CD8-positive, alpha-beta T cell (primary cell): ENCODE measurements at regions of chr18 and their contacts with region 1.

Region 1: GRCh38 chr18:47930931-47931717 is 665 bp upstream of the SMAD2 start:
- DNase-seq: peak; percentile 82 to 98 (median 95)
- ATAC-seq: peak; percentile 76
- H3K4me3 ChIP-seq: peak overlapping the region; percentile 61 to 63
- H3K4me3 Mint-ChIP-seq: peak overlapping the region; percentile 78
- H3K27ac ChIP-seq: peak overlapping the region; percentile 62 to 84
- H3K27ac Mint-ChIP-seq: peak overlapping the region; percentile 91
- H3K4me1 ChIP-seq: peaks cover 40% of the 10 kb centered on the region
- H3K4me1 Mint-ChIP-seq: peaks cover 41% of the 10 kb centered on the region
- H3K27me3 ChIP-seq: no peaks in the 10 kb centered on the region
- H3K27me3 Mint-ChIP-seq: no peaks in the 10 kb centered on the region
- CTCF ChIP-seq: no peak

Region 2: DNA sequence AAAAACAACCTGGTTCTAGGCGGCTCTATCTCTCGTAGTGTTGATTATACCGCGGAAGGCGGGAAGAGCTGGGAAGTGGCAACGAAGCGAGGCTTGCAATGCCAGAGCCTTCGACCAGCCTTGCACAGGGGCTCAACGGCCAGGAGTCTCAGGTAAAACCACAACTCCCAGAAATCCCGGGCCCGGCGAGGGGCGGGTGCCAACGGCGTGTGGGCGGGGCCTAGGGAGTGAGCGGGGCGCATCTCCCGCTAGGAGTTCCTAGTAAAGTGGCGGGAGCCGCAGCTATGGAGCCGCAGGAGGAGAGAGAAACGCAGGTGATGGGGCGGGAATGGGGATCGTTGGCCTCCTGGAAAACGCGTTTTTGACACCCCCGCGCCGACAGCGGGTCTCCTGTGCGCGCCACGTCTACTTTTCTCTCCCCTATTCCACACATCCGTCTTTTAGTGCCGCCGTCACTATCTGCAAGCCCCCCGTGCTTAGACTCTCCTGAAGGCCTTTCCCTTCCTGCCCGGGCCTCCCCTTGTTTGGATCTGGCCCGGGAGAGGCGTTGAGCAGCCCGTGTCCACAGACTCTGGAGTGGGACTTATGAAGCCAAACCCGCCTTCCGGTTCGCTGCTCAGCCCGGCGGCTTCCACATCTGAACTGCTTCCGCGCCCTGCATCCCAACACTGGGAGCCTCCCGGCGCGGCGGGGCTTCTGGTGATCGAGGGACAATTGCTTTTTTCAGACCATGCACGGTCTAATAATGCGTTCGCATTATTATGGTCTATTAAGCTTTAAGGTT is 1826.8 kb before region 1 on chr18 and contains the start of gene HAUS1:
- CTCF ChIA-PET with region 1: no interaction called
- POLR2A ChIA-PET with region 1: no interaction called
- intact Hi-C with region 1: loop called in 1 of 2 experiments (anchors 10 kb)
- DNase-seq: peak; percentile 42 to 88 (median 81)
- ATAC-seq: peak; percentile 95
- H3K4me3 ChIP-seq: peak within 1 kb of the TSS; percentile 87 to 90
- H3K4me3 Mint-ChIP-seq: peak within 1 kb of the TSS; percentile 96
- H3K27ac ChIP-seq: peak within 1 kb of the TSS; percentile 42 to 52
- H3K27ac Mint-ChIP-seq: peak within 1 kb of the TSS; percentile 88
- H3K4me1 ChIP-seq: peaks cover 12% of the 10 kb centered on the region
- H3K4me1 Mint-ChIP-seq: peaks cover 31% of the 10 kb centered on the region
- H3K27me3 ChIP-seq: no peaks in the 10 kb centered on the region
- H3K27me3 Mint-ChIP-seq: no peaks in the 10 kb centered on the region
- CTCF ChIP-seq: no peak
- total RNA-seq, gene HAUS1: 6.3 to 8.8 TPM

Region 3: GRCh38 chr18:47150029-47150823 is 780.9 kb before region 1 on chr18 and contains the start of gene HDHD2:
- CTCF ChIA-PET with region 1: no interaction called
- POLR2A ChIA-PET with region 1: no interaction called
- intact Hi-C with region 1: loop called in 1 of 2 experiments (anchors 10 kb)
- DNase-seq: peak; percentile 35 to 87 (median 76)
- ATAC-seq: peak; percentile 77
- H3K4me3 ChIP-seq: peak within 1 kb of the TSS; percentile 76 to 82
- H3K4me3 Mint-ChIP-seq: peak within 1 kb of the TSS; percentile 89
- H3K27ac ChIP-seq: peak within 1 kb of the TSS; percentile 66 to 78
- H3K27ac Mint-ChIP-seq: peak within 1 kb of the TSS; percentile 94
- H3K4me1 ChIP-seq: peaks cover 22% of the 10 kb centered on the region
- H3K4me1 Mint-ChIP-seq: peaks cover 53% of the 10 kb centered on the region
- H3K27me3 ChIP-seq: no peaks in the 10 kb centered on the region
- H3K27me3 Mint-ChIP-seq: no peaks in the 10 kb centered on the region
- CTCF ChIP-seq: no peak
- total RNA-seq, gene HDHD2: 6.6 to 6.8 TPM

Region 4: DNA sequence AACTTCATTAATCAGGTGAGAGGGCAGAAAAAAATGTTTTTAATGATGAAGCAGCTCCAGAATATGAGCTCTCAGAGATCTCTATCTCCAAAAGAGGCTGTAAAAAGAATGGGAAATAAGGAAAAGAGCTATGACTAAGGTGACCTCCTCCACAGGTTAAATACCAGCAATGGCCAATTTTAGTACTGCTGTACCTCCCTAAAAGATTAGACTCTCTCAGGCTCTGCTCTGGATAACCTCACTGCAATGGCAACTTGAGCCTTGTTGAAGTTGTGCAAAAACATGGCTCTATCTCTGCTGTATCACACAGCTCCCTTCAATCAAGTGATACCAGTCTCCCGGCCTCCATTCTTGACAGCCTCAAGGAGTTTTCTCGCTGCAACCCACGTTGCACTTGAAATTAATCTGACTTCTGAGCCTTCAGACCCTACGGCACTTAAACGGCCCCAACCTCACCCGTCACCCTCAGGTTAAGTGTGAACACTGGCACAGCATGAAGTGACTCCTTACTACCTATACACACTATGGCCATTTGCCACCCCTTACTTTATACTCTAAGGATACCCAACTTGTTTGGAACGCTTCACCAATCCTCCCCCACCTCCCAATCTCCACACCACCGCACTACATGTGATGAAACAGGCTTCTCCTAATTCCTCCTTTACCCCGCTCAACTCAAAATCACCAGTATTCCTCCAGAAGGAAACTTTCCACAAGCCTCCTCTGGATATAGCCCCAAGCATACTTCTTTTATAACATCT is 37.0 kb before region 1 on chr18:
- CTCF ChIA-PET with region 1: no interaction called
- POLR2A ChIA-PET with region 1: interaction called, 46 read pairs
- intact Hi-C with region 1: loop called in 1 of 2 experiments (anchors 5 kb)
- DNase-seq: no peak
- ATAC-seq: no peak
- H3K4me3 ChIP-seq: no peak overlapping the region
- H3K4me3 Mint-ChIP-seq: no peak overlapping the region
- H3K27ac ChIP-seq: no peak overlapping the region
- H3K27ac Mint-ChIP-seq: peak overlapping the region; percentile 10
- H3K4me1 ChIP-seq: peaks cover 7% of the 10 kb centered on the region
- H3K4me1 Mint-ChIP-seq: peaks cover 56% of the 10 kb centered on the region
- H3K27me3 ChIP-seq: no peaks in the 10 kb centered on the region
- H3K27me3 Mint-ChIP-seq: no peaks in the 10 kb centered on the region
- CTCF ChIP-seq: no peak

Region 5: DNA sequence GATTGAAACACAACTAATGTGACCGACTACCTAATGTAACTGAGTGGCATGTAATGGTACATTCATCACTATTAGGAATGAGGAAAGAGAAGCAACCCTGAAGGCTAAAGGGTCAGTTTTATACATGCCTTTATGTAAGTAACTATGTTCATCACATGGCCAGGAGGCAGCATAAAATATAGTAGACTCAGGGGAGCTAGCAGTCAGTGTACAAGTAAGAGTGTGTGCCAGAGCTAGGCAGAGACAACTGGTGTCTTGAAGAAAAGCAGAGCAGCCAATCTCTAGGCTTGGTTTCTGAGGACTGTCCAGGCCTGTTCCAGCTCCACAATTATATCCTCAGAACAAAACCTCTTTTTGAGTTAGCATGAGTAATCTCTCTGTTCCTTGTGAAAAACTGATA is 18.8 kb before region 1 on chr18:
- CTCF ChIA-PET with region 1: interaction called, 3 read pairs
- POLR2A ChIA-PET with region 1: interaction called, 8 read pairs
- intact Hi-C with region 1: loop called in 1 of 2 experiments (anchors 2 kb)
- DNase-seq: peak in 1 of 9 experiments; percentile 13
- ATAC-seq: peak; percentile 47
- H3K4me3 ChIP-seq: no peak overlapping the region
- H3K4me3 Mint-ChIP-seq: peak overlapping the region; percentile 20
- H3K27ac ChIP-seq: peak overlapping the region in 1 of 2 experiments; percentile 57
- H3K27ac Mint-ChIP-seq: peak overlapping the region; percentile 79
- H3K4me1 ChIP-seq: peaks cover 37% of the 10 kb centered on the region
- H3K4me1 Mint-ChIP-seq: peaks cover 84% of the 10 kb centered on the region
- H3K27me3 ChIP-seq: no peaks in the 10 kb centered on the region
- H3K27me3 Mint-ChIP-seq: no peaks in the 10 kb centered on the region
- CTCF ChIP-seq: no peak

Region 6: GRCh38 chr18:47953471-47953931 is 22.4 kb after region 1 on chr18:
- CTCF ChIA-PET with region 1: no interaction called
- POLR2A ChIA-PET with region 1: interaction called, 3 read pairs
- intact Hi-C with region 1: loop called in 1 of 2 experiments (anchors 2 kb)
- DNase-seq: peak in 7 of 9 experiments; percentile 6 to 61 (median 31)
- ATAC-seq: peak; percentile 58
- H3K4me3 ChIP-seq: no peak overlapping the region
- H3K4me3 Mint-ChIP-seq: peak overlapping the region; percentile 16
- H3K27ac ChIP-seq: peak overlapping the region in 1 of 2 experiments; percentile 51
- H3K27ac Mint-ChIP-seq: peak overlapping the region; percentile 73
- H3K4me1 ChIP-seq: peaks cover 16% of the 10 kb centered on the region
- H3K4me1 Mint-ChIP-seq: peaks cover 18% of the 10 kb centered on the region
- H3K27me3 ChIP-seq: no peaks in the 10 kb centered on the region
- H3K27me3 Mint-ChIP-seq: no peaks in the 10 kb centered on the region
- CTCF ChIP-seq: no peak

Region 7: DNA sequence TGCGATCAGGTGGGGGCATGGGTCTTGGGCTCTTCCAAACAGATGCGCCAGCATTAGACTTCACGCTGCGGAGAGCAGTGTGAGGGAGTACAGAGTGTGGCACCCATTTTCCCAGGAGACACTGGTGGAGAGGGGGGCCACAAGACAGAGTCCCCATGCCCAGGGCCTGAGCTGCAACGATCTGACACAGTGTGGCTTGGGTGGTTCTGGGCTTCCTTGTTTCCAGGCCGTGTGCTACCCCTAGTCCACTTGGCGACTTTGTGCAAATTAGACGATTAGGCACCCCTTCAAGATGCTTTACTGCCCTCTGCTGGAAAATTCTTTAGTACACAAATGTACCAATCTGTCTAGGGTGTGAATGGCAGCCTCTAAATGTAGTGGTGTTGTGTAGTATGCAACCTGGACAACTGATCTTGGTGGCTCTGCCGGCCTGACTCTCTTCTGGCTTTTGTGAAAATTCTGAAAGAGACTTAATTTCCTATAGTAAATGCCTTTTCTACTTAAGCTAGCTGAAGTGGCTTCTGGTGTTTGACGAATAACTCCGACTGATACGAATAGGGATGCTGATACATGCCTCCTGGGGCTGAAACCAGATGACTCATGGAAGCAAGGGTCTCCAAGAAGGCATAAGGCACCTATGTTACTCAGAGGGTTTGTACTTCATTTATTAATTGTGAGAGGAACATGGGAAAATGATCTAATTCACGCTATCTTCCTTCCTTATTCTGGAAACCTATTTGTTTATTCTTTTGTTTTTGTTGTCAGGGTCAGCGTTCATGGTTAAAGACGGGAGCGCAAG is 91.6 kb after region 1 on chr18:
- CTCF ChIA-PET with region 1: no interaction called
- POLR2A ChIA-PET with region 1: no interaction called
- intact Hi-C with region 1: loop called in 1 of 2 experiments (anchors 1 kb)
- DNase-seq: peak in 2 of 9 experiments; percentile 44 to 63
- ATAC-seq: peak; percentile 49
- H3K4me3 ChIP-seq: no peak overlapping the region
- H3K4me3 Mint-ChIP-seq: no peak overlapping the region
- H3K27ac ChIP-seq: no peak overlapping the region
- H3K27ac Mint-ChIP-seq: no peak overlapping the region
- H3K4me1 ChIP-seq: no peaks in the 10 kb centered on the region
- H3K4me1 Mint-ChIP-seq: peaks cover 5% of the 10 kb centered on the region
- H3K27me3 ChIP-seq: peaks cover 0 to 4% of the 10 kb centered on the region in 2 experiments
- H3K27me3 Mint-ChIP-seq: peaks cover 18% of the 10 kb centered on the region
- CTCF ChIP-seq: peak; percentile 37

Region 8: DNA sequence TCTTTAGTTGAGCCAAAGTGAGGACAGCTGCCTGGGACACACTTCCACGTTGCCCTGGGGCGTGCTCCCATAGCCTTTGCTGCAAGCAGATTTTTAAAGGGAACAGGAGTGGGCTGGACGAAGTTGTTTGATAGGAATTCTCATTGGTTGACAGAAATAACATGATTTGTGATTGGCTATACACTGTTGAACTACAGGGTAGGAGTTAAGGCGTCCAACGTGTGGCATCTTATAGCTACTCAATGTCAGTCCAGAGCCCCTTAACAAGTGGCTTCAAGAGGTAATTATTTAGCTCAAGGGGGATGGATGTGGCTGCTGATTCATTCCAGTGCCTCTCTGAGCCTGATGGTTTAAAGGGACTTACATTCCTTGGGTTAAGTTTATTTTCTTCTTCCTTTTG is 1816.8 kb after region 1 on chr18:
- CTCF ChIA-PET with region 1: no interaction called
- POLR2A ChIA-PET with region 1: no interaction called
- intact Hi-C with region 1: no loop called
- DNase-seq: no peak
- ATAC-seq: no peak
- H3K4me3 ChIP-seq: no peak overlapping the region
- H3K4me3 Mint-ChIP-seq: no peak overlapping the region
- H3K27ac ChIP-seq: no peak overlapping the region
- H3K27ac Mint-ChIP-seq: no peak overlapping the region
- H3K4me1 ChIP-seq: peaks cover 14% of the 10 kb centered on the region
- H3K4me1 Mint-ChIP-seq: peaks cover 22% of the 10 kb centered on the region
- H3K27me3 ChIP-seq: no peaks in the 10 kb centered on the region
- H3K27me3 Mint-ChIP-seq: peaks cover 5% of the 10 kb centered on the region
- CTCF ChIP-seq: no peak